Cardiac septum (tissue), 1 donor: ENCODE measurements at regions of chr17 and their contacts with region 1.

Region 1: DNA sequence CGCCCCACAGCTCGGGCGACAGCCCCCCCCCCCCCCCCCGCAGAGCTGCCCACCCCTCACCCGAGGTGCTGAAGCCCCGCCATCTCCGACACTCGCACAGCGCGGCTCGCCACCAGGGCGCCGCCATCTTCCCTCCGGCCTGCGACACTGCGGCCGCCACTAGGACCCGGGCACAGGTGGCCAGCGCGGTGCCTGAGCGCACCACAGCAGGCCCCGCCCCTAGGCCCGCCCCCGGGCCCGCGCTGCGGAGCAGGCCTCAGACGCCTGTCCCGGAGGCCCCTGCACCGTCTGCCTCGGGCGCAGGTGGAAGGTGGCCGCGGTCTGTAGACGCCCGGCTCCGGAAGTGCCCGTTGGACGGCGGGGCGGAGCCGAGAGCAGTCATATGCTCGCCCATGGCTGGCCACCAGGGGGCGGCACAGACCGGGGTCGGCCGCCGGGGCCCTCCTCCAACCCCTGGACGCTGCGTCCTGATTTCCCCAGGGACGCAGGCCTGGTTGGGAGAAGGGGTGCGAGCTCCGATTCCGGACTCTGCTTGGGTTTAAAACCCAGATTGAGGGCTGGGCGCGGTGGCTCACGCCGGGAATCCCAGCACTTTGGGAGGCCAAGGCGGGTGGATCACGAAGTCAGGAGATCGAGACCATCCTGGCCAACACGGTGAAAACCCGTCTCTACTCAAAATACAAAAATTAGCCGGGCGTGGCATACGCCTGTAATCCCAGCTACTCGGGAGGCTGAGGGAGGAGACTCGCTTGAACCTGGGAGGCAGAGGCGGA is at the start of gene MRPL38:
- DNase-seq: peak; percentile 96
- total RNA-seq, gene MRPL38: 76.3 TPM

Region 2: GRCh38 chr17:75855310-75856081 is 49.4 kb before region 1 on chr17 and contains the start of gene WBP2:
- intact Hi-C with region 1: no loop called
- DNase-seq: peak; percentile 98
- total RNA-seq, gene WBP2: 129 TPM

Region 3: DNA sequence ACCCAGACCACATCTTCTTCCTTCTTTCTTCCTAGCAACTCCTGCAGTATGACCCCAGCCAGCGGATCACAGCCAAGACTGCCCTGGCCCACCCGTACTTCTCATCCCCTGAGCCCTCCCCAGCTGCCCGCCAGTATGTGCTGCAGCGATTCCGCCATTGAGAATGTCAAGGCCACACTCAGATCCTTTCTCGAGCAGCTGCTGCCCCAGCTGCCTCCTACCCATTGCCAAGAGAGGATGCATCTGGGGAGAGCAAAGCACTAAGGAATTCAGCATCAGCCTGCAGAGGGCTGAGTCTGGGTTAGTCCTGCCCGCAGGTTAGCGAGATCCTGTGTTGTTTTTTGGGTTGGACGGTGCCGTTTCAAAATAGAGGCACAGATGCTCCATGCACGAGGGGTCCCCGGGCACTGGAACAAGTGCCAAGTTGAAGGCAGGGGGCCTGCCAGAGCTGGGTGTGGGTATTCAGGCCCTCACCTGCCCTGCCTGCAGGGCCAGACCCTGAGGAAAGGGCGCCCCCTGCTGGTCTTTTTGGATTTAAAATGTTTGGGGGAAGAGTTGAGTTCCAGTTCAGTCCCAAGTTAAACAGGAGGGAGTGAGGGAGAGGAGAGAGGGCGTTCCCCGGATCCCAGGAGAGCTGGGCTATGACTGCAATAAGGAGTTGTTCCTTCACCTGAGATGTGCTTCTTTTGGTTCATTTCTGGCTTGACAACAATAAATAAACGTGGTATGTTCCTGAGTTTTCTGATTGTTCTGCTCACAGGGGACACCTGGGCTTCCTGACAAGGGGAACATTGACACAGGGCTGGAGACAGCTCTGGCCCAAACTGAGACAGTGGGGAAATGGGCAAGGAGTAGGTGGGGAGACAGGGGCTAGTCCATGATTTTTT is 100.6 kb after region 1 on chr17:
- intact Hi-C with region 1: loop called (anchors 2 kb)
- DNase-seq: peak; percentile 89